Mammary epithelial cell (primary cell): ENCODE measurements at regions of chr2 and their contacts with region 1.

Region 1: GRCh38 chr2:96509114-96509846 is 4.1 kb upstream of the NEURL3 start:
- DNase-seq: peak; percentile 75
- H3K4me3 ChIP-seq: no peak overlapping the region
- H3K27ac ChIP-seq: no peak overlapping the region
- H3K4me1 ChIP-seq: peaks cover 25% of the 10 kb centered on the region
- H3K27me3 ChIP-seq: no peaks in the 10 kb centered on the region
- CTCF ChIP-seq: peak; percentile 90 to 99

Region 2: DNA sequence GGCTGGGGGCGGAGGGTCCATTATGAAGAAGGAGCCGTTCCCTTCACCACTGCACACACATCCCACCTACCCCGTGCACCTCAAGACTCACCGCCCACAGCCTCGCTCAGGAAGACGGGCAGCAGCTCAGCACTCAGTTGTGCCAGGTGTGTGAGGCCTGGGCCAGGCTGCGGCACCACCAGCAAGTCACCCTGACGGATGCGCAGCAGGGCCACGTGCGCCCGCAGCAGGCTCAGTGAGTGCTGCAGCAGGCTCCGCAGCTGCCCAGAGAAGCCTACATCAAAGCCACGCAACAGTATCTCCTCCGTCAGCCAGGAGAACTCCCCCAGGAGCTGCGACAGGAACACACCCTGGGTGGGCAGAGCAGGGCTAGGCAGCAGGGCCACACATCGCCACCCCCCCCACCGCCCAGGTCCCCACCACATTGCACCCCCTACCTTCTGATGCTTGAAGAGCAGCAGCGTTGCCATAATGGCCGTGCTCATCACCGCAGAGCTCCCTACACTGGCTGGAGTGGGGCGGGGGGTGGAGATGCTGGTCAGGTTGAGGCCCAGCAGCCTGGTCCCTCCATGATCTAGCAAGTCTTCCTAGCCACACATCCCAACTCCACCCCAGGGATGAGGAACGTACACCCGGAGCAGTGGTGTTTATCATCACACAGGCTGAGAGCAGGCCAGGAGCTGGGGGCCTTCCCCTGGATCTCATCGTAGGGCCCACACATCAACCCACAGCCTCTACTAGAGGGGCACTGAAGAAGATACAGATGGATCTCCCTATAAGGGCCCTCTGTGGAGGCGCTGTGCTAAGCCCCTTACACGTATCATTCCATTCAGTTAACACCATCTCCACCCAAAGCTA is 484.7 kb before region 1 on chr2:
- CTCF ChIA-PET with region 1: no interaction called
- dilution Hi-C with region 1: no loop called
- in situ Hi-C with region 1: loop called in 1 of 2 experiments (anchors 25 kb)
- intact Hi-C with region 1: no loop called
- DNase-seq: no peak
- H3K4me3 ChIP-seq: no peak overlapping the region
- H3K27ac ChIP-seq: no peak overlapping the region
- H3K4me1 ChIP-seq: no peaks in the 10 kb centered on the region
- H3K27me3 ChIP-seq: no peaks in the 10 kb centered on the region
- CTCF ChIP-seq: no peak

Region 3: GRCh38 chr2:96265840-96266679 is 243.2 kb before region 1 on chr2 and contains the starts of genes CIAO1 and TMEM127:
- CTCF ChIA-PET with region 1: interaction called, 7 read pairs
- dilution Hi-C with region 1: no loop called
- in situ Hi-C with region 1: no loop called
- intact Hi-C with region 1: loop called (anchors 1 kb)
- DNase-seq: peak; percentile 99
- H3K4me3 ChIP-seq: peak within 1 kb of the TSS; percentile 93 to 98 (median 96)
- H3K27ac ChIP-seq: peak within 1 kb of the TSS; percentile 76
- H3K4me1 ChIP-seq: peaks cover 30% of the 10 kb centered on the region
- H3K27me3 ChIP-seq: no peaks in the 10 kb centered on the region
- CTCF ChIP-seq: peak in 1 of 2 donors; percentile 28
- total RNA-seq, gene CIAO1: 64.5 to 93.9 TPM
- total RNA-seq, gene TMEM127: 39.9 to 43.8 TPM

Region 4: DNA sequence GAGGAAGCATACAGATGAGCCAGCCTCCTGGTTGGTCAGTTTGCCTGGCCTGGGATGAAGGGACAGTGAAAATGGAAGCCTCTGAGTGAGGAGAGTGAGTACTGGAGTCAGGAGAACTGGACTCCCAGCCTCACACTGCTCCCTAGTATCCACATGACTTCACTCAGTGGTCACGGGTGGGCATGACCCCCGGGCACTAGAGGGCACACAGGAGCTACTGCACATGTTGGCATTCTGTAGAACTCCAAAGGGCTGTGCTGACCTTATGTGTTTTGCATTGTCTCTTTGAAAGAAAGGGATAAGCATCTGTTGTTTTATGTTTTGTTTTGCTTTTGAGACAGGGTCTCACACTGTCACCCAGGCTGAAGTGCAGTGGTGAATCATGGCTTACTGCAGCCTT is 150.0 kb before region 1 on chr2:
- CTCF ChIA-PET with region 1: no interaction called
- dilution Hi-C with region 1: no loop called
- in situ Hi-C with region 1: no loop called
- intact Hi-C with region 1: loop called (anchors 1 kb)
- DNase-seq: no peak
- H3K4me3 ChIP-seq: no peak overlapping the region
- H3K27ac ChIP-seq: no peak overlapping the region
- H3K4me1 ChIP-seq: no peaks in the 10 kb centered on the region
- H3K27me3 ChIP-seq: no peaks in the 10 kb centered on the region
- CTCF ChIP-seq: peak; percentile 8 to 15

Region 5: DNA sequence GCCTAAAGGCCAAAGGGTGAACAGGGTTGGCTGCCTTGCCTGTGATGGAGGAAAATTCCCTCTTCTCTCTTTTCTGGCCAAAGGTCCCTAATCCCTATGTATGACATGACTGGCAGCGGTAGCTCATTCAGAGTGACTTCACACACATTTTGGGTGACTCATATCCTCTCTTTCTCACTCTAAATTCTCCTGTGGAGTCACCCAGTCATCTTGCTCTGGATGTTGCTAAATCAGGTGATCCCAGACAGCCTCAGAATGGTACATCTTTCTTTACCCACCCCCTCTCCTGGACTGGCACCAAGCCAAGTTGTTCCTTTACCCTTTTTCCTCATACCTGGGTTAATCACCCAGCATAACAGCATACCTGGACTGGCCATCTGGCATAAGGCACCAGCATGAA is 81.4 kb before region 1 on chr2:
- CTCF ChIA-PET with region 1: no interaction called
- dilution Hi-C with region 1: no loop called
- in situ Hi-C with region 1: no loop called
- intact Hi-C with region 1: loop called (anchors 1 kb)
- DNase-seq: peak; percentile 96
- H3K4me3 ChIP-seq: no peak overlapping the region
- H3K27ac ChIP-seq: no peak overlapping the region
- H3K4me1 ChIP-seq: peaks cover 20% of the 10 kb centered on the region
- H3K27me3 ChIP-seq: no peaks in the 10 kb centered on the region
- CTCF ChIP-seq: no peak

Region 6: GRCh38 chr2:96521219-96521618 is 11.9 kb after region 1 on chr2:
- CTCF ChIA-PET with region 1: no interaction called
- dilution Hi-C with region 1: no loop called
- in situ Hi-C with region 1: no loop called
- intact Hi-C with region 1: no loop called
- DNase-seq: no peak
- H3K4me3 ChIP-seq: no peak overlapping the region
- H3K27ac ChIP-seq: no peak overlapping the region
- H3K4me1 ChIP-seq: no peaks in the 10 kb centered on the region
- H3K27me3 ChIP-seq: peaks cover 2% of the 10 kb centered on the region
- CTCF ChIP-seq: no peak

Region 7: GRCh38 chr2:96554293-96555145 is 45.2 kb after region 1 on chr2:
- CTCF ChIA-PET with region 1: interaction called, 4 read pairs
- dilution Hi-C with region 1: no loop called
- in situ Hi-C with region 1: no loop called
- intact Hi-C with region 1: loop called (anchors 1 kb)
- DNase-seq: peak; percentile 20
- H3K4me3 ChIP-seq: no peak overlapping the region
- H3K27ac ChIP-seq: no peak overlapping the region
- H3K4me1 ChIP-seq: peaks cover 14% of the 10 kb centered on the region
- H3K27me3 ChIP-seq: no peaks in the 10 kb centered on the region
- CTCF ChIP-seq: peak; percentile 87 to 97